CD4-positive, alpha-beta memory T cell (primary cell): ENCODE measurements at regions of chr6 and their contacts with region 1.

Region 1: DNA sequence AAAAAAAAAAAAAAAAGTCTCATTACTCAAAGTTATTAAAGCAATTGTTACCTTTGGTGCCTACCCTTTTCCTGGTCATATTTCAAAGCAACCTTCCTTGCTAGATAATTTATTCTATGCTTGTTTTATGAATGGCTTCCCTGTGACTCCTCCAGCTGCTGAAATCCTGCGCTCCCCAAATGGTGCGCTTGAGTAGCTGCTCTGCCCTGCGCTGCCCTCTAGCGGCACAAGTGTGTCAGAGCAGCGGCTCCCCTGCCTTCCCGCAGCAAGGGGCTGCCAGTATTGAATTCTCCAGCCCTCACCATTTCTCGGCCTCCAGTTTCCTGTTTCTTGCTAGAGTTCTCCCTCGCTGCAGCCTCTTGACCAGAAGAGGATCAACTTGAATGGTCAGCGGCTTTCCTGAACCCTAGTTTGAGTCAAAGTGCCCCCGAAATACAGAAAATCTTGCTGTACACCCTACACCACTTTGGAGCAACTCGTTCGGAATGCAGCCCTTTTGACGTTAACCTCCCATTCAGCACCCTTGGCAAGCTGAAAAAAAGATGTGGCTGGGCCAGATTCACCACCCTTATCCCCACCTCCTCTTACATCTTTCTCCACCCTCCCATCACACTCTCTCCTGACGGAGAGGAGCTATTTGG is 60.4 kb upstream of the KLHL31 start:
- DNase-seq: peak; percentile 55 to 71 (median 58)
- H3K4me3 ChIP-seq: no peak overlapping the region
- H3K4me3 Mint-ChIP-seq: no peak overlapping the region
- H3K27ac ChIP-seq: no peak overlapping the region
- H3K27ac Mint-ChIP-seq: no peak overlapping the region
- H3K4me1 ChIP-seq: no peaks in the 10 kb centered on the region
- H3K4me1 Mint-ChIP-seq: peaks cover 2 to 7% (median 5%) of the 10 kb centered on the region in 4 donors
- H3K27me3 ChIP-seq: no peaks in the 10 kb centered on the region
- H3K27me3 Mint-ChIP-seq: peaks cover 2 to 4% of the 10 kb centered on the region in 2 donors

Region 2: DNA sequence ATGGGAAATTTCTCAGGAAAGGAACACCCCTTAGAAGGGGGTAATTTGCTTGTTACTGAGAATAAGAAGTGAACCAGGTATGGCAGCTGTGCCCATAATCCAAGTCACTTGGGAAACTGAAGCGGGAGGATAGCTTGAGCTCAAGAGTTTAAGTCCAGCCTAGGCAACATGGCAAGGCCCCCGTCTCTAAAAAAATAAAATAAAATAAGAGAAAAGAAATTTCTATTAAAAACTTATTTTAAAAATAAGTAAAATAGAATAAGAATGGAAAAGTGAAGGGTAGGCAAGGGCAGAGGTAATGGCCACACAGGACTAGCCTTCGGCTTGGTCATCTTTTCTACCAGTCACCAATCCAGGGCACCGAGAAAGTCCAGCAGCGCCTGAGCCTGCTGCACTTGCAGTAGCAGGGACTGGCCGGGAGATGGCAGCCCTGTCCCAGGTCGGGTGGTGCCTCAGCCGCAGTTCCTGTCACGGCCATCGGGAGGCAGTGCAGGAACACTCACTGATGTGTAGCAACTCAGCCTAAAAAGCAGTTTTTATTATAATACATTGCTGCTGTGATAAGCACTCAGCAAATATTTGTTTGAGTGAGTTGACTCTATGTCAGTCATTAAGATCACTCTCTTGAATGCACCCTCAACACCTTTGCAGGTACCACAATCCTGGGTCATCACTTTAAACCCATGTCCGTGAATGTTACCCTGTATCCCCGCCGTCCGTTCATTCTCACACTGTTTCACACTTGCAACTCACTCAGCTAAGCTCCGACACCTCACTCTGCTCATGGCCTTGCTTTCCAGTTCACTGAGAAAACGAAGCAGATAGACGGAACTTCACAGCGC is 554.1 kb before region 1 on chr6:
- CTCF ChIA-PET with region 1: interaction called, 3 read pairs
- POLR2A ChIA-PET with region 1: no interaction called
- intact Hi-C with region 1: loop called (anchors 1 kb)
- DNase-seq: peak; percentile 83 to 90 (median 85)
- H3K4me3 ChIP-seq: no peak overlapping the region
- H3K4me3 Mint-ChIP-seq: no peak overlapping the region
- H3K27ac ChIP-seq: no peak overlapping the region
- H3K27ac Mint-ChIP-seq: no peak overlapping the region
- H3K4me1 ChIP-seq: no peaks in the 10 kb centered on the region
- H3K4me1 Mint-ChIP-seq: no peaks in the 10 kb centered on the region
- H3K27me3 ChIP-seq: no peaks in the 10 kb centered on the region
- H3K27me3 Mint-ChIP-seq: no peaks in the 10 kb centered on the region

Region 3: GRCh38 chr6:53501432-53501831 is 224.5 kb before region 1 on chr6:
- CTCF ChIA-PET with region 1: interaction called, 385 read pairs
- POLR2A ChIA-PET with region 1: no interaction called
- intact Hi-C with region 1: no loop called
- DNase-seq: no peak
- H3K4me3 ChIP-seq: no peak overlapping the region
- H3K4me3 Mint-ChIP-seq: no peak overlapping the region
- H3K27ac ChIP-seq: no peak overlapping the region
- H3K27ac Mint-ChIP-seq: peak overlapping the region in 1 of 7 donors; percentile 47
- H3K4me1 ChIP-seq: no peaks in the 10 kb centered on the region
- H3K4me1 Mint-ChIP-seq: no peaks in the 10 kb centered on the region
- H3K27me3 ChIP-seq: no peaks in the 10 kb centered on the region
- H3K27me3 Mint-ChIP-seq: no peaks in the 10 kb centered on the region

Region 4: GRCh38 chr6:53651764-53652401 is 74.0 kb before region 1 on chr6:
- CTCF ChIA-PET with region 1: interaction called, 59 read pairs
- POLR2A ChIA-PET with region 1: interaction called, 4 read pairs
- intact Hi-C with region 1: loop called (anchors 1 kb)
- DNase-seq: peak; percentile 79 to 83 (median 82)
- H3K4me3 ChIP-seq: peak overlapping the region; percentile 64 to 89
- H3K4me3 Mint-ChIP-seq: peak overlapping the region; percentile 87 to 96 (median 93)
- H3K27ac ChIP-seq: peak overlapping the region; percentile 50
- H3K27ac Mint-ChIP-seq: peak overlapping the region; percentile 79 to 95 (median 94)
- H3K4me1 ChIP-seq: peaks cover 22% of the 10 kb centered on the region
- H3K4me1 Mint-ChIP-seq: peaks cover 16 to 47% (median 27%) of the 10 kb centered on the region in 4 donors
- H3K27me3 ChIP-seq: no peaks in the 10 kb centered on the region
- H3K27me3 Mint-ChIP-seq: no peaks in the 10 kb centered on the region

Region 5: DNA sequence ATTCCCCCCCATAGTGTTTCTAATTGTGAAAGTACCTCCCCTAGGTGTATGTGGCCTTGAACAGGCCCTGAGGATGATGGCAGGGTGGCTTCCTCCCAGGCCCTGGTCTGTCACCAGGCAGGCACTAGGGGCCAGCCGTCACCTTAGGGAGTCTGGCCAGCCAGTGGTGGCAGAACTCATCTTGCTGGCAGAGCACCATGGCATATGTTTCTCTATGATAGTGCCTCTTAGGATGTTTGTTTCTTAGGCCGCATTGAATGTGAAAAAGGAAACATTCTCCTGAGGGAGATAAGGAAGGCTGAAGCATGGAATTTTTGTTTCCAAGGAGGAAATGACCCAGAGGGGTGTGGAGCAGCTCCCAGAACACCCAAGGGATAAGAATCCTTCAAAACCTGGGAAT is 15.1 kb before region 1 on chr6:
- CTCF ChIA-PET with region 1: interaction called, 107 read pairs
- POLR2A ChIA-PET with region 1: no interaction called
- intact Hi-C with region 1: no loop called
- DNase-seq: no peak
- H3K4me3 ChIP-seq: no peak overlapping the region
- H3K4me3 Mint-ChIP-seq: no peak overlapping the region
- H3K27ac ChIP-seq: no peak overlapping the region
- H3K27ac Mint-ChIP-seq: no peak overlapping the region
- H3K4me1 ChIP-seq: no peaks in the 10 kb centered on the region
- H3K4me1 Mint-ChIP-seq: no peaks in the 10 kb centered on the region
- H3K27me3 ChIP-seq: peaks cover 4% of the 10 kb centered on the region
- H3K27me3 Mint-ChIP-seq: peaks cover 16 to 17% of the 10 kb centered on the region in 2 donors

Region 6: GRCh38 chr6:53794720-53795253 is 68.9 kb after region 1 on chr6 and contains the start of gene LRRC1:
- CTCF ChIA-PET with region 1: interaction called, 14 read pairs
- POLR2A ChIA-PET with region 1: no interaction called
- intact Hi-C with region 1: no loop called
- DNase-seq: peak; percentile 79 to 84 (median 84)
- H3K4me3 ChIP-seq: peak within 1 kb of the TSS; percentile 74 to 77
- H3K4me3 Mint-ChIP-seq: peak within 1 kb of the TSS; percentile 94 to 98 (median 97)
- H3K27ac ChIP-seq: peak within 1 kb of the TSS; percentile 41
- H3K27ac Mint-ChIP-seq: peak within 1 kb of the TSS; percentile 81 to 97 (median 91)
- H3K4me1 ChIP-seq: peaks cover 21% of the 10 kb centered on the region
- H3K4me1 Mint-ChIP-seq: peaks cover 14 to 36% (median 28%) of the 10 kb centered on the region in 4 donors
- H3K27me3 ChIP-seq: no peaks in the 10 kb centered on the region
- H3K27me3 Mint-ChIP-seq: peaks cover 2 to 6% of the 10 kb centered on the region in 2 donors
- total RNA-seq, gene LRRC1: 4.6 to 5.2 TPM